ENCODE measurements at regions of chr7 and their contacts with region 1.

Region 1: GRCh38 chr7:90312745-90313144 is 8.4 kb downstream of the FAM237B start:
- DNase-seq: peak; percentile 6
- ATAC-seq: 0 out of 3 replicates have a peak, but pooled peaks have one; percentile 50
- H3K4me3 ChIP-seq: no peak overlapping the region
- H3K27ac ChIP-seq: no peak overlapping the region
- H3K4me1 ChIP-seq: peaks cover 13% of the 10 kb centered on the region; the same call in 1 of the 2 replicates
- H3K27me3 ChIP-seq: no peaks in the 10 kb centered on the region
- CTCF ChIP-seq: no peak
- EP300 ChIP-seq: no peak
- POLR2A ChIP-seq: no peak
- RAD21 ChIP-seq: no peak

Region 2: DNA sequence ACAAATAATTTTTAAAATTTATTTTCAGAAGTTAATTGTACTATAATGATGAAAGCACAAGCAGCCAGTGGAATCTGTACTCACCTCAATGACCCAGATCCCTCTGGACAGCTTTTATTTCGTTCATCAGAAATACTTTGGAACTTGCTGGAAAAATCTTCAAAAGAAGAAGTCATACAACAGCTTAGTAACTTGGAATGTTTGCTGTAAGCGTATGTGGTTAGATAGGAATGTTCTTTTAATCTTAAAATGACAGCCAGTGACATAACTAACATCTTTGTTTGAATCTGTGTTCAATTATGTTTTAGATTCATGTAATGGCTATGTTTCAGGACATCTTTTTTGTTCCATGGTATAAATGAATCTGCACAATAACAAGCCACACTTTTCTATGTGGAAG is 41.0 kb before region 1 on chr7:
- CTCF ChIA-PET with region 1: no interaction called
- POLR2A ChIA-PET with region 1: no interaction called
- in situ Hi-C with region 1: no loop called
- intact Hi-C with region 1: no loop called
- DNase-seq: peak; percentile 59
- ATAC-seq: no peak
- H3K4me3 ChIP-seq: no peak overlapping the region
- H3K27ac ChIP-seq: peak overlapping the region; percentile 39
- H3K4me1 ChIP-seq: peaks cover 73% of the 10 kb centered on the region
- H3K27me3 ChIP-seq: no peaks in the 10 kb centered on the region
- CTCF ChIP-seq: no peak
- EP300 ChIP-seq: no peak
- POLR2A ChIP-seq: no peak
- RAD21 ChIP-seq: no peak

Region 3: GRCh38 chr7:90290244-90291113 is 22.3 kb before region 1 on chr7:
- CTCF ChIA-PET with region 1: no interaction called
- POLR2A ChIA-PET with region 1: no interaction called
- in situ Hi-C with region 1: no loop called
- intact Hi-C with region 1: no loop called
- DNase-seq: no peak
- ATAC-seq: no peak
- H3K4me3 ChIP-seq: no peak overlapping the region
- H3K27ac ChIP-seq: no peak overlapping the region
- H3K4me1 ChIP-seq: no peaks in the 10 kb centered on the region
- H3K27me3 ChIP-seq: no peaks in the 10 kb centered on the region
- CTCF ChIP-seq: no peak
- EP300 ChIP-seq: no peak
- POLR2A ChIP-seq: no peak
- RAD21 ChIP-seq: no peak

Region 4: DNA sequence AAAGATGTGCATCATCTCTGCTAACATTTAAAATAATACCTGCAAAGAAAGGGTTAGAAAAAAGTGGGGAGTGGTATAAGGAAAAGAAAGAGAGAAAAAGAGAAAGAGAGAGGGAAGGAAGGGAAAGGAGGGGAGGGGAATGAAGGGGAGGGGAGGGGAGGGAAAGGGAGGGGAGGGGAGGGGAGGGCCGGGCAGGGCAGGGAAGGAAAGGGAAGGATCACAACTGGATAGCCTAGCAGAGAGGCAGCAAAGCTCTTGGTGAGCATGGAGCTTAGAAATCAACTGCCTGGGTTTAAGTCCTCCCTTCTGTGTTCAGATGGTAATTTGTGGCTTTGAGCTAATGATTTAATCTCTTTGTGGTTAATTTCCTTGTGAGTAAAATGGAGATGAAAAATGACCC is 13.8 kb after region 1 on chr7:
- CTCF ChIA-PET with region 1: no interaction called
- POLR2A ChIA-PET with region 1: no interaction called
- in situ Hi-C with region 1: no loop called
- intact Hi-C with region 1: no loop called
- DNase-seq: no peak
- ATAC-seq: no peak
- H3K4me3 ChIP-seq: no peak overlapping the region
- H3K27ac ChIP-seq: no peak overlapping the region
- H3K4me1 ChIP-seq: no peaks in the 10 kb centered on the region
- H3K27me3 ChIP-seq: peaks cover 0 to 9% of the 10 kb centered on the region in 2 experiments; a peak in 2 of 5 replicates
- CTCF ChIP-seq: no peak
- EP300 ChIP-seq: no peak
- POLR2A ChIP-seq: no peak
- RAD21 ChIP-seq: no peak

Region 5: DNA sequence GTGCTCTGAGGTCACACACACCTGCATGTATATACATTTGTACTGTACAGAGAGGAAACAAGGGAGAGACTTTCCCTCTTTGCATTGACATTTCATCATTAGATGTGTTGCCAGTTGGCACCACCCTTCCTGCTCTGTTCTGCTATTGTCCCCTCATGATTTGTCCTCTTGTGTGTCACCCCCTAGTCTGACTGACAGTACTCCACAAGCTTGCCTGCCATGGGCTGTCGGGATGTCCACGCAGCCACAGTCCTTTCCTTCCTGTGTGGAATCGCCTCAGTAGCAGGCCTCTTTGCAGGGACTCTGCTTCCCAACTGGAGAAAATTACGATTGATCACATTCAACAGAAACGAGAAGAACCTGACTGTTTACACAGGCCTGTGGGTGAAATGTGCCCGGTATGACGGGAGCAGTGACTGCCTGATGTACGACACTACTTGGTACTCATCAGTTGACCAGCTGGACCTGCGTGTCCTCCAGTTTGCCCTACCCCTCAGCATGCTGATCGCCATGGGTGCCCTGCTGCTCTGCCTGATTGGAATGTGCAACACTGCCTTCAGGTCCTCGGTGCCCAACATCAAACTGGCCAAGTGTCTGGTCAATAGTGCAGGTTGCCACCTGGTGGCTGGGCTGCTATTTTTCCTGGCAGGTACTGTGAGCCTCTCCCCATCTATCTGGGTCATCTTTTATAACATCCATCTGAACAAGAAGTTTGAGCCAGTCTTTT is 99.9 kb after region 1 on chr7:
- CTCF ChIA-PET with region 1: interaction called, 3 read pairs
- POLR2A ChIA-PET with region 1: no interaction called
- in situ Hi-C with region 1: no loop called
- intact Hi-C with region 1: loop called (anchors 1 kb)
- DNase-seq: peak; percentile 44
- ATAC-seq: peak; percentile 94
- H3K4me3 ChIP-seq: no peak overlapping the region
- H3K27ac ChIP-seq: no peak overlapping the region
- H3K4me1 ChIP-seq: peaks cover 50% of the 10 kb centered on the region
- H3K27me3 ChIP-seq: no peaks in the 10 kb centered on the region
- CTCF ChIP-seq: peak; percentile 67
- EP300 ChIP-seq: no peak
- POLR2A ChIP-seq: no peak
- RAD21 ChIP-seq: 0 out of 2 replicates have a peak, but pooled peaks have one; percentile 22

Region 6: GRCh38 chr7:90424720-90425119 is 112.0 kb after region 1 on chr7:
- CTCF ChIA-PET with region 1: interaction called, 14 read pairs
- POLR2A ChIA-PET with region 1: no interaction called
- in situ Hi-C with region 1: no loop called
- intact Hi-C with region 1: loop called (anchors 1 kb)
- DNase-seq: no peak
- ATAC-seq: no peak
- H3K4me3 ChIP-seq: no peak overlapping the region
- H3K27ac ChIP-seq: no peak overlapping the region
- H3K4me1 ChIP-seq: no peaks in the 10 kb centered on the region
- H3K27me3 ChIP-seq: no peaks in the 10 kb centered on the region
- CTCF ChIP-seq: no peak
- EP300 ChIP-seq: no peak
- POLR2A ChIP-seq: no peak
- RAD21 ChIP-seq: no peak

Region 7: GRCh38 chr7:90777465-90777864 is 464.7 kb after region 1 on chr7:
- CTCF ChIA-PET with region 1: no interaction called
- POLR2A ChIA-PET with region 1: no interaction called
- in situ Hi-C with region 1: no loop called
- intact Hi-C with region 1: loop called (anchors 10 kb)
- DNase-seq: no peak
- ATAC-seq: no peak
- H3K4me3 ChIP-seq: no peak overlapping the region
- H3K27ac ChIP-seq: no peak overlapping the region
- H3K4me1 ChIP-seq: no peaks in the 10 kb centered on the region
- H3K27me3 ChIP-seq: peaks cover 0 to 9% of the 10 kb centered on the region in 2 experiments; a peak in 2 of 5 replicates
- CTCF ChIP-seq: no peak
- EP300 ChIP-seq: no peak
- POLR2A ChIP-seq: no peak
- RAD21 ChIP-seq: no peak

Measured in HepG2 (cell line).